ENCODE measurements at regions of chr6 and their contacts with region 1.

Region 1: GRCh38 chr6:75893058-75893775 is 144.2 kb downstream of the MYO6 start:
- DNase-seq: peak; percentile 13
- H3K4me3 Mint-ChIP-seq: no peak overlapping the region
- H3K27ac Mint-ChIP-seq: no peak overlapping the region
- H3K4me1 Mint-ChIP-seq: no peaks in the 10 kb centered on the region
- H3K27me3 Mint-ChIP-seq: no peaks in the 10 kb centered on the region
- CTCF ChIP-seq: peak; percentile 58

Region 2: DNA sequence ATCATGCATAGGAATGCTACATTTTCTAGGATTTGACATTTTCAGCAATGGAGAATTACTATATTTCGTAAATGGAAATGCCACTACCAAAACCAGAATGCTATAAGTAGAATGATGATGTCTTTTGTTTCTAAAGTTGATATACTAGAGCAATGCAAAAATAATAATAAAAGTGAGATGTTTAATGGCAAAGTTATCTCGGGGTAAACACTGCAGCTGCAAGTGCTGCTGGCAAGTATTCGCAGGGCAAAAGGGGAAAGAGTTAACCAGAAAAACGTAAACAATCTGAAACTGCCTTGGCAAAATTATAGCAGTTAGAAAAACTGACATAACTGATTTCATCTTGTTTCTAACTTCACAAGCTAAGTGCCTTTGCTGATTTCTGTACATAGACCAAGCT is 354.1 kb before region 1 on chr6:
- CTCF ChIA-PET with region 1: no interaction called
- intact Hi-C with region 1: no loop called
- DNase-seq: no peak
- H3K4me3 Mint-ChIP-seq: no peak overlapping the region
- H3K27ac Mint-ChIP-seq: no peak overlapping the region
- H3K4me1 Mint-ChIP-seq: no peaks in the 10 kb centered on the region
- H3K27me3 Mint-ChIP-seq: peaks cover 34% of the 10 kb centered on the region
- CTCF ChIP-seq: no peak

Region 3: DNA sequence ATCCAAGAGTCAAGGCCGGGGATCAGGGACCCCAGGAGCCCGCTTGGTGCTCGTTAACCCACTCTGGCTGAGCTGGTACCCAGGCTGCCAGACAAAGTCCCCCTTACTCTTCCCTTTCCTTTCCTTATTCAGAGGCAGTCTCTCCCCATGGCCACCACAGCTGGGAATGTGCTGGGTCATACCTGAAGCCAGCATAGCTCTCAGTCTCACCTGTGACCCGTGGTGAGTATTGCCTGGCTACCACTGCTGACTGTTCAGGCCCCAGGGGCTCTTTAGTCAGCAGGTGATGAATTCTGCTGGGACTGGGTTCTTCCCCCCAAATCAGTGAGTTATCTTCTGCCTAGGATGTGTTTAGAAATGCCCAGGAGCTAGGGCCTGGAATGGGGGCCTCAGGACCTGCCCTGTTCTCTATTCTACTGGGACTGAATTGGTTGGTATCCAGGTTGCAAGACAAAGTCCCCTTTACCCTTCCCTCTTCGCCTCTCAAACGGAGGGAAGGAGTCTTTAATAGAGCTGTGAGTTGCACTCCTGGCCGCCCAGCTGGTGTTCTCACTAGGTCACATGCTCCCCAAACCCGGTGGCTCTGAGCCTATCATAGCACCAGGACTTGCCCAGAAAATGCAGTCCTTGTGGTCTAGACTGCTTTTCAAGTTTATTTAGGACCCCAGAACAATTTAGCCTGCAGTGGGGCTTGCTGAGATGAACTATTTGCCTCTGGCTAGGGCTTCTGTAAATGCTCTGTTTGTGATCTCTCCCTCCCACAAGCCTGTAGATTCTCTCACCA is 79.6 kb before region 1 on chr6:
- CTCF ChIA-PET with region 1: no interaction called
- intact Hi-C with region 1: no loop called
- DNase-seq: no peak
- H3K4me3 Mint-ChIP-seq: no peak overlapping the region
- H3K27ac Mint-ChIP-seq: no peak overlapping the region
- H3K4me1 Mint-ChIP-seq: peaks cover 9% of the 10 kb centered on the region
- H3K27me3 Mint-ChIP-seq: no peaks in the 10 kb centered on the region
- CTCF ChIP-seq: no peak

Region 4: DNA sequence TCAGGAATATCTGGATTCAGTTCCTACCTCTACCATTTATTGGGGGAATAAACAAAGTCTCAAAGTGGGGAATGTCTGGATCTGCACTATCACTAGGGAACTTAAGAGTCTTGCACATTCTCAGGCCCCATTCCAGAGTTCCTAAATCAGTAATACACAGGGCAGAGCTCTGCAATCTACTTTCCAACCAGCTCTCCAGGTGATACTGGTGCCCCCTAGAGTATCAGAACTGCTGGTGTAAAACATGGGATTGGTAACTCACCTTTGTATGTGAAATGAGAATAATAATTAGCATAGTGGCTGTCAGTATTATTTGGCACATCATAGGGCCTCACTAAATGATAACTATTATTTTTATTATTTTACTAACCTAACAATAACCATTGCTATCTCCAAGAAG is 458.1 kb after region 1 on chr6:
- CTCF ChIA-PET with region 1: interaction called, 11 read pairs
- intact Hi-C with region 1: no loop called
- DNase-seq: peak; percentile 30
- H3K4me3 Mint-ChIP-seq: no peak overlapping the region
- H3K27ac Mint-ChIP-seq: no peak overlapping the region
- H3K4me1 Mint-ChIP-seq: no peaks in the 10 kb centered on the region
- H3K27me3 Mint-ChIP-seq: no peaks in the 10 kb centered on the region
- CTCF ChIP-seq: peak; percentile 31

Region 5: DNA sequence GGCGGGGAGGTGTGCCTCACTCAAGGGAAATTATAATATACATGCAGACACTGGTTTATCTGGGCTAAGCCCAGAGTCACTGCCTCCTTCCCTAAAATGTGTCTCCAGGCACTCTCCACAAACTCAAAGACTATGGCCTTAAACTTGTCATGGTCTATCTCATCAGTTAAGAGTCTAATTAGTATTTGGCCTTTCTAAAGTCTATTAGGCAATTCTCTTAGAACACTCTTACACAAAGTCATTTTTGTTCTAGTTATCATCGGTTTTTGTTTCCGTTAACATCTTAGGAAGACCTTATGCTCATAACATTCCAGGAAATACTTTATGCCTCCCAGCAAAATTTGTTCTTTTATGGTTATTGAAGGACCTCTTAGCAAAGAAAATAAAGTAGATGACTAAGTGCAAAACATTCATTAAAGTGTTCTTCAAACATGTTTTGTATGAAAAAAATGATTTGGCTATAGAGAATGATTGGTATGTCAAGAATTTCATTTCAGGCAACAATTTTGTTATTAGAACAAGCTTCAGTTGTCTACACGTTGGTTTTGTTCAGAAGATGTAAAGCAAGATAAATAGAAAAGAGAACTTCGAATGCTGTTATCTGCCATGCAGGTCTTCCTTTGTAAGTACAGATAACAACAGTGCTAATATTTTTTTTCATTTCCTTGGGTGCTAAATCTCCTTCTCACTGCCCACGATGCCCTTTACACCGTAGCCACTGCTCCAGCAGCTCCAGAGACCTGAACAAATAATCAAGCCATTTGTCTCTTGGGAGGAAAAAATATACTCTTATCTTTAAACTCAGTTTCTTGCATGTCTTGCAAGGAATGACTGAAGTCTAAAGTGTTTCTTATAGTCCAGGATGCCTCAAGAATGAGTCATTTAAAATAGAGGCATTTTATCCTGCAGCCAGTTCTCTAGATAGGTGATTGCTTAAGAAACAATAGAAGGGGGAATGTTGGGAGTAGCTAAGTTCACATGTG is 1399.6 kb after region 1 on chr6:
- CTCF ChIA-PET with region 1: no interaction called
- intact Hi-C with region 1: loop called (anchors 10 kb)
- DNase-seq: no peak
- H3K4me3 Mint-ChIP-seq: peak overlapping the region; percentile 49
- H3K27ac Mint-ChIP-seq: peak overlapping the region; percentile 26
- H3K4me1 Mint-ChIP-seq: peaks cover 30% of the 10 kb centered on the region
- H3K27me3 Mint-ChIP-seq: no peaks in the 10 kb centered on the region
- CTCF ChIP-seq: no peak

Measured in Calu3 (cell line).